ENCODE measurements at regions of chr6 and their contacts with region 1.

Region 1: GRCh38 chr6:167898673-167899311 is 72.1 kb downstream of the AFDN start:
- DNase-seq: no peak
- H3K4me3 ChIP-seq: no peak overlapping the region
- H3K27ac ChIP-seq: no peak overlapping the region
- H3K4me1 ChIP-seq: no peaks in the 10 kb centered on the region
- H3K27me3 ChIP-seq: no peaks in the 10 kb centered on the region
- CTCF ChIP-seq: peak; percentile 85

Region 2: DNA sequence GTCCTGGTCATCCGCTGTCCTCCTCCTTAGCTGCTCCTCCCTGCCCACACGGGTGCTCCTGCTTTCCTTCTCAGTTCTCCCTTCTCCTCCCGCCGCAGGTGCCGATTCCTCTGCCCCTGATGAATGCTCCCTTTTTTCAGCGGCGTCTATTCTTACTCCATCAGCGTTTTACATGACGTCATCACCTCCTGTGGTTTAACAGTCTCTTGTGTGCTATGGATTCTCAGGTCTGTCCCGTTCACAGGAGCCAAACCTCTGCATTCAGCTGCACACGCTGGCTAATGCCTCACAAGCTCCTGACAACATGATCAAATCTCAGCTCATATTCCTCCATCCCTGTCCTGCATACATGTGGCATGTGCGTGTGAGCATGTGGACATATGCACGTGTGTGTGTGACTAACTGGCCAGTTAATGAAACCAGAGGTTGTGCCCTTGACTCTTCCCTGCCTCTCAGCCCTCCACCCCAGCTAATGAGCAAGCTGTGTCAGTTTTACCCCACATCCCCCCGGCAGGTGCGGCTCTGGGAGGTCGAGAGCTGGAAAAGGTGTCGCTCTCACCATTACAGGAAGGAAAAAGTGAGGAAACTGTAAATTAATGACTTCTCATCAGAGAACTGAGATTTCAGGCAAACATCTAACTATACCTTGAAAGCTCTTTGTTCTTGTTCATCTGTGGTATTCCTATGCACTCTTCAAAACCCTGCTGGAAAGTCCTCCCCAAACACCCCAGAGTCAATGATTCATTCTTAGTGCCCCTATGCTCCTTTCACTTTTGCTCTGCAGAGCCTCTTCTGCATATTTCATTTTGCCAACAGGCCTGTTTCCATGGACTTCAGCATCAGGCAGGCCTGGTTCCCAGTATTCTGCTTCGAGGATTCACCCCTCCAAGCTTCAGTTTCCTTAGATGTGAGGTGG is 410.8 kb before region 1 on chr6:
- intact Hi-C with region 1: loop called (anchors 2 kb)
- DNase-seq: no peak
- H3K4me3 ChIP-seq: no peak overlapping the region
- H3K27ac ChIP-seq: no peak overlapping the region
- H3K4me1 ChIP-seq: peaks cover 17% of the 10 kb centered on the region
- H3K27me3 ChIP-seq: no peaks in the 10 kb centered on the region
- CTCF ChIP-seq: no peak

Measured in left ventricle myocardium inferior (tissue), 1 donor.